Mammary epithelial cell (primary cell): ENCODE measurements at regions of chr4 and their contacts with region 1.

Region 1: GRCh38 chr4:6264225-6264540 is 5.5 kb upstream of the WFS1 start:
- DNase-seq: peak; percentile 8
- H3K4me3 ChIP-seq: no peak overlapping the region
- H3K27ac ChIP-seq: no peak overlapping the region
- H3K4me1 ChIP-seq: peaks cover 9% of the 10 kb centered on the region
- H3K27me3 ChIP-seq: no peaks in the 10 kb centered on the region
- CTCF ChIP-seq: peak; percentile 34 to 82

Region 2: DNA sequence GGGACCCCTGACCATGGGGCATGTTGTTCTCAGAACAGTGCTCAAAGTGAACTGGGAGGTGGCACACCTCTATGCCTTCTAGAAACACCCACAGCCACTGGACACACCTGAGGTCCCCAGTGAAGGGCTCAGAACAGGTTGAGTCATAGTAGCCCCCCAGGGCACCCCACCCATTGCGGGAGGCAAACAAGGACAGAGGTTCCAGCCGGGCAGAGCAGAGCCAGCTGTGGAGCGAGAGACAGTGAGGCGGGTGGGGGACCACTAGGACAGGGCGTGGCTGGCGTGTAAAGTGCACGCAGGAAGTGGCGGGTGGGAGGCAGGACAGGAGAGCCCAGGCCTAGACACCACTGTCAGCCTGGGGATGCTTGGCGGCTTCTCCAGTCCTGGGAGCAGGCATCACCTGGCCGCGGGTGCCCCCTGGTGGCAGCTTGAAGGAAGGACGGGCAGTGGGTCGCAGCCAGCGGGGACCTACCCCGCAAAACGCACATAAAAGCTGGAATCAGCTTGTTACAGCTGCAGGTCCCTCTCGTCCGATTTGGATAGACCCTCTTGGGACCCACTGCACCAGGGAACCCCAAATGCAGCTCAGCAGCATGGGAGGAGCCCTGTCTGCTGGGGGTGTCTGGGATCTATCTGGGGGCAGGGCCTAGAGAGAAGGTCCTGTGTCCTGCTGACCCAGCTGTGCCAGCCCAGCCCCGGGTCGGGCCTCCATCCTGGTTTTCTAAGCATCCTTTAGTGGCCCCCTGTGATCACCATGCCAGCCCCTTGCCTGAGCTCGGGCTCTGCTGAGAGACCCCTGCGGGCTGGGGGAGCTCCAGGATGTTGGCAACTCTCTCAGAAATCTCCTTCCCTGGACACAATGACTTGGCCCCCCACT is 63.1 kb after region 1 on chr4:
- CTCF ChIA-PET with region 1: interaction called, 4 read pairs
- dilution Hi-C with region 1: no loop called
- in situ Hi-C with region 1: no loop called
- intact Hi-C with region 1: loop called (anchors 1 kb)
- DNase-seq: peak; percentile 40
- H3K4me3 ChIP-seq: no peak overlapping the region
- H3K27ac ChIP-seq: no peak overlapping the region
- H3K4me1 ChIP-seq: peaks cover 9% of the 10 kb centered on the region
- H3K27me3 ChIP-seq: no peaks in the 10 kb centered on the region
- CTCF ChIP-seq: peak; percentile 78 to 92

Region 3: DNA sequence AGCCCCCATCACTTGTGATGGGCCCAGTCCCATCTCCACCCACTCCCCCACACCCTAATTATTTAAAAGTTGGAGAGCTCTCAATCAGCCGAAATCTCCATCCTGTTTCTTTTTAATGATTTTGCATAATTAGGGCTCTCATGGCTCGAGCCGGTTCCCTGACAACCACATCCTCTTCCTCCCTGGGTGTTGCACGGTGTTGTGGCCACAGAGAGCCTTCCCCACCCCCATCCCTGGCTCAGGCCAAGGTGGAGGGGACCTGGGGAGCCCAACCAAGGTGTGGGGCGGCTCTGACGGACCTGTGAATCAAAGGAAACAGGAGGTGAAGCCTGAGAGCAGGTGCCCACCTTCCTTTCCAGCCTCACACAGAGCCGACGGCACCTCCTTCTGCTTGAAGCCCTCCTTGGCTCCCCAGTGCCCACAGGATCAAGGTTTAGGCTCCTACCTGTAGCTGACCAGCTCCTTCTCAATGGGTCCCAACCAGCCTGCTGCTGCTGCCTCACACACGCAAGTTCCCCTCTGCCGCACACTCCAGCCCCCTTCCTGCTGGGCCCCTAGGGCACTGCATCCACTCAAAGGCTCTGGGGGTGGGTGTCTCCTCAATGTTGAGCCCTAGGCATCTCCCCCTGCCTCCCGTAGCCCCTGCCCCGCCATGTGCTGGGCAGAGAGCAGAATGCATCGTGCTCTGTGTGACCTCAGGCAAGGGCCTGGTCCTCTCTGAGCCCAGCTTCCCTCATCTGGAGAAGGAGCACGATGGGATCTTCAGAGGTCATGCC is 74.2 kb after region 1 on chr4:
- CTCF ChIA-PET with region 1: no interaction called
- dilution Hi-C with region 1: loop called (anchors 5 kb)
- in situ Hi-C with region 1: no loop called
- intact Hi-C with region 1: no loop called
- DNase-seq: no peak
- H3K4me3 ChIP-seq: no peak overlapping the region
- H3K27ac ChIP-seq: no peak overlapping the region
- H3K4me1 ChIP-seq: no peaks in the 10 kb centered on the region
- H3K27me3 ChIP-seq: no peaks in the 10 kb centered on the region
- CTCF ChIP-seq: no peak